ENCODE measurements at regions of chr3 and their contacts with region 1.

Region 1: GRCh38 chr3:172546628-172547214 is 23.5 kb upstream of the TNFSF10 start:
- DNase-seq: no peak
- H3K4me3 Mint-ChIP-seq: no peak overlapping the region
- H3K27ac Mint-ChIP-seq: peak overlapping the region; percentile 79
- H3K4me1 Mint-ChIP-seq: peaks cover 62% of the 10 kb centered on the region
- H3K27me3 Mint-ChIP-seq: no peaks in the 10 kb centered on the region

Region 2: DNA sequence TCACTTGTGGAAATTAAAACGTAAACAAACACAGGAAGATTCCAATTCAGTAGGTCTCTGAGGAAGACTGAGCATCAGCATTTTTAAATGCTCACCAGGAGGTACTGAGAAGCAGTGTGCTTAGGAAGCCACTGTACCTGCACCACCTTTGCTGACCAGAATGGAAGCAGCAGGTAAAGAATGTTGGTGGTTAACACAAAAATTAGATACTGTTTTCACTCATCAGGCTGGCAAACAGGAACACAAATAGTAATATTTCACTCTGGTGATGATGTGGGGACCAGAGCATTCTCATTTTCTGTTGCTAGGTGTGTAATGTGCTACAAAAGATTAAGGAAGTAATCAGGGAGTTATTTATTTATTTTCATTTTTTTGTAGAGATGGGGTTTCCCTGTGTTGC is 68.6 kb before region 1 on chr3:
- CTCF ChIA-PET with region 1: no interaction called
- POLR2A ChIA-PET with region 1: no interaction called
- DNase-seq: no peak
- H3K4me3 Mint-ChIP-seq: no peak overlapping the region
- H3K27ac Mint-ChIP-seq: no peak overlapping the region
- H3K4me1 Mint-ChIP-seq: peaks cover 21% of the 10 kb centered on the region
- H3K27me3 Mint-ChIP-seq: peaks cover 12% of the 10 kb centered on the region

Region 3: GRCh38 chr3:172530566-172530965 is 16.2 kb before region 1 on chr3:
- CTCF ChIA-PET with region 1: interaction called, 20 read pairs
- POLR2A ChIA-PET with region 1: interaction called, 8 read pairs
- DNase-seq: peak; percentile 51
- H3K4me3 Mint-ChIP-seq: peak overlapping the region; percentile 8
- H3K27ac Mint-ChIP-seq: peak overlapping the region; percentile 82
- H3K4me1 Mint-ChIP-seq: peaks cover 45% of the 10 kb centered on the region
- H3K27me3 Mint-ChIP-seq: no peaks in the 10 kb centered on the region

Region 4: GRCh38 chr3:173857154-173857553 is 1310.4 kb after region 1 on chr3:
- CTCF ChIA-PET with region 1: no interaction called
- POLR2A ChIA-PET with region 1: no interaction called
- DNase-seq: no peak
- H3K4me3 Mint-ChIP-seq: no peak overlapping the region
- H3K27ac Mint-ChIP-seq: no peak overlapping the region
- H3K4me1 Mint-ChIP-seq: no peaks in the 10 kb centered on the region
- H3K27me3 Mint-ChIP-seq: no peaks in the 10 kb centered on the region